AG04449 (cell line): ENCODE measurements at regions of chr9 and their contacts with region 1.

Region 1: DNA sequence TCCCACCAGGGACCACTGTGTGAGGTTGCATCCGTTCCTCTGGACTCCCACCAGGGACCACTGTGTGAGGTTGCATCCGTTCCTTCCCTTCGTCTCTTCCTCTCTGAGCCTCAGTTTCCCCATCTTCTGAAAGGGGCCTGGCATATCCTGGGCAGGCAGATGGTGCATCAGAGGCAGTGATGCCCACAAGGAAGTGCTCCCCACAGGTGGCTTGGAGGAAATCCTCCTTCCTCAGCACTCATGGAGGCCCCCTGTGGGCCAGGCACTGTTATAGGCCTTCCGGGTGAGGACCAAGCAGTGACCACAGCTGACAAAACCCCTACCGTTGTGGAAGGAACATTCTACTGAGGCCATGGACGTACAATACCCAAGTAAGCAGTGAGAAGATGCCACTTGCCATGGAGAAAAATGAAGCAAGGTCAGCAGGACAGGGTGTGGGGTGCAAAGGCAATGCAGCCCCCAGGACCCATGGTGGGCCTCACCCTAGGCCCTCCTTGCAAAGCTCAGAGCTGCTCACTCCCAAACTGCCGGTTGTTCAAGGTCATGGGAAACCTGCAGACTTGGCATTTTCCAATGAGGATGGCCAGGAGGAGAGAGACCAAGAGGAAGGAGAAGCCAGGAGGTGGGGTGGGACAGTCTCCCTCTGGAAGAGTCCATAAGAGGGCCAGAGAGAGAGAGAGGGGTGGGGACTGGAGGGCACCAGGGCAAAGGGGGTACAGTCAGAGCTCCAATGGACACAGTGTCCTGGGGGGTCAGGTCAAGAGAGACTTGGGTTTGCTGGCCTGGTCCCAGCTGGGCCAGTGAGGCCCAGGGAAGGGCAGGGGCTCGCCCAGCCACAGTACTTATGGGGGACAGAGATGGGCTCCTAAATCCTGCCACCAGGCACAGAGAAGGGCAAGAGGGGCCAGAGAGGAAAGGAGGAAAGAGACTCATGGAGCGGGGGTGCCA is 51.1 kb downstream of the C9orf50 start:
- DNase-seq: no peak
- H3K4me3 ChIP-seq: peak overlapping the region; percentile 3
- CTCF ChIP-seq: peak; percentile 52

Region 2: GRCh38 chr9:129237195-129237611 is 332.6 kb before region 1 on chr9:
- CTCF ChIA-PET with region 1: no interaction called
- POLR2A ChIA-PET with region 1: no interaction called
- DNase-seq: no peak
- H3K4me3 ChIP-seq: peak overlapping the region; percentile 25; the same call in 1 of the 2 replicates
- CTCF ChIP-seq: no peak

Region 3: GRCh38 chr9:129597355-129598088 is 27.7 kb after region 1 on chr9:
- CTCF ChIA-PET with region 1: no interaction called
- POLR2A ChIA-PET with region 1: interaction called, 13 read pairs
- DNase-seq: no peak
- H3K4me3 ChIP-seq: peak overlapping the region; percentile 45
- CTCF ChIP-seq: no peak